K562 (cell line): ENCODE measurements at regions of chr17 and their contacts with region 1.

Region 1: DNA sequence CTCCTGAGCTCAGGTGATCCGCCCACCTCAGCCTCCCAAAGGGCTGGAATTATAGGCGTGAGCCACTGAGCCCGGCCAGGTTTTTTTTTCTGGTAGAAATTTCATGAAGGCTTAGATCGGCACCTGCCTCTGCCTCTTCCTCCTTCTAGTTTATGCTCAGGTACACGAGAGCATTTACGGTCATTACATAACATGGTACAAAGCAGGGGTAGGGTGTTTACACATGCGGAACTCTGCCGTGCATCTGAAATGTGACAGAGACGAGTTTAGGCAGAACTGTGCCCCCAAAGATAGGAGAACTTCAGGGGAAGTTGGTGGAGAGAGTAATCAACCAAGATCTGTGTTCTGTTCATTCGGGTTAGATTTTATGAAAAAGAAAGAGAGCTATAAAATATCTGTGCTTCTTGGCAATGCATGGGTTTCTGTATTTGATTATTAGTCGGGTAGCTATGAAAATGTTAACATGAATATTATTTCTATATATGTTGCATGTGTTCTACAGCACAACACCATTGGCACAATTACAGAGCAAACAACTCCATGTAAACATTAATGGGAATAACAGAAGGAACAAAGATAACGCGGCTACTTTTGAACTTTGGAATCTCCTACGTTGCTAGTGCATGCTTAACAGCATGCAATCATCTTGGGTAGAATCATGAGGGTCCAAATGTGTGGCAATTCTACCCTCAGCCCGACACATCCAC is 23.5 kb upstream of the MAP2K6 start:
- DNase-seq: no peak
- ATAC-seq: no peak
- H3K4me3 ChIP-seq: no peak overlapping the region
- H3K27ac ChIP-seq: no peak overlapping the region
- H3K4me1 ChIP-seq: no peaks in the 10 kb centered on the region
- H3K27me3 ChIP-seq: peaks cover 5 to 7% of the 10 kb centered on the region in 2 experiments; a peak in 3 of 5 replicates
- CTCF ChIP-seq: no peak
- EP300 ChIP-seq: no peak
- POLR2A ChIP-seq: no peak
- RAD21 ChIP-seq: no peak

Region 2: DNA sequence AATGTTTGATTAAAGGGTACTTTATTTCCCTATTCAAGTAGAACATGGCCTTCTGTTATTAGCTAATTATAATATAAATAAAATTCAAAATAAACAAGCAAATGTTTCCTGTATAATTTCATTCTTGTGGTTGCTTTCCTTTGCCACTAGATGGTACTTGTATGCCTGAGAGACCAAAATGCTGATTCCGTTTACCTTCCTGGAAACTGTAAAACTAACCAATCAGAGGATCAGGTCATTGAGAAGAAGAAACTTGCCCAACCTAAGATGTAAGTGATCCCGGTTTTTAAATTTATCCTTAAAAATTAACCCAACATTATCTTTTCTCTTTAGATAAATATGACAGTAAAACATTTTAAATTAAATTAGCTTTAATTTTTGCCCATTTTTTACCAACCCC is 55.9 kb before region 1 on chr17:
- CTCF ChIA-PET with region 1: no interaction called
- POLR2A ChIA-PET with region 1: no interaction called
- in situ Hi-C with region 1: no loop called
- intact Hi-C with region 1: loop called (anchors 10 kb)
- DNase-seq: peak; percentile 12 to 39 (median 32)
- ATAC-seq: 0 out of 3 replicates have a peak, but pooled peaks have one; percentile 43
- H3K4me3 ChIP-seq: no peak overlapping the region
- H3K27ac ChIP-seq: no peak overlapping the region
- H3K4me1 ChIP-seq: no peaks in the 10 kb centered on the region
- H3K27me3 ChIP-seq: peaks cover 0 to 3% of the 10 kb centered on the region in 2 experiments; a peak in 1 of 5 replicates
- CTCF ChIP-seq: peak in 2 of 3 experiments; percentile 25 to 49; a peak in 3 of 6 replicates
- EP300 ChIP-seq: no peak
- POLR2A ChIP-seq: no peak
- RAD21 ChIP-seq: peak in 1 of 2 experiments; percentile 50; a peak in 2 of 4 replicates